ENCODE measurements at regions of chrX and their contacts with region 1.

Region 1: DNA sequence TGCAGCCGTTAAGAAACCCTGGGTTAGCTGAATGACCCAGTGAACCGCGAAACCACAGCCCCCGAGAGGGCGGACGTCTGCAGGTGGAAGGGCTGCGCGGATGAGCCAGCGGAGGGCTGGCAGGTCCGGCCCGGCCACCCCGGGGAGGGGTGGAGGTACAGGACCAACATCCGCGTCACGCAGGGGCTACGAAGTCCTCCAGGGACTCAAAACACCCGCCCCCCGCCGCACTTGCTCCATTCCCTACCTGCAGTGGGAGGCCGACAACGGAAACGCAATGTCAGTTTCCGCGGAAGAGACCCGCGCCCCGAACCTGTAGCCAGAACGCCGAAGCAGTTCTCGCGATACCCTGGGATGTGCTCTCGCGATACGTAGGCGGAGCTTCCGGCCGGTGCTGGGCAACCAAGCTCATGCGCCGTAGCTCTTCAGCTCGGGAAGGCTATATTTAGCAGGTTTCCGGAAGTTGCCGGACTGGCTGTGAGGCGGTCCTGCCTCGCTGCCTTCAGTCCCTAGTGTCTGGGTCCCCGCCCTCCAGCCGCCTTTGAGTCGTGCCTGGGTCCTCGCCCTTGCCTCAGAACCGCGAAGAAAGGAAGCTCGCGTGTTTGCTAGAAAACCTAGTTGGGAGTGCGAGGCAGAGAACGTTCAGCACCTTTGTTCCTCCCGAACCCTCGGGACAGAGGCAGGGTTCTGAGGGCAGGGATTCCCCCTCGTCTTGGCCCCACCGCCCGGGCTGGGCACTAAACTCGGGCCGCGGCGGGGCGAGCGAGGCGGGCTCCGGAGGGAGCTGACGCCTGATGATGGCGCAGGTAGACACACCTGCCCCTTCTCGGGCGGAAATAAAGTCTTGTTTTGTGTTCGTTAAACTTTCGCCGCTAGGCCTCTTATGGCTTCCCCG is at the starts of genes OFD1 and TRAPPC2:
- DNase-seq: peak; percentile 91 to 93 (median 93)
- H3K4me3 ChIP-seq: peak within 1 kb of the TSS; percentile 49 to 84
- H3K4me3 Mint-ChIP-seq: peak within 1 kb of the TSS; percentile 91 to 99 (median 98)
- H3K27ac ChIP-seq: peak within 1 kb of the TSS; percentile 93
- H3K27ac Mint-ChIP-seq: peak within 1 kb of the TSS; percentile 96 to 100 (median 99)
- H3K4me1 ChIP-seq: peaks cover 59% of the 10 kb centered on the region
- H3K4me1 Mint-ChIP-seq: peaks cover 35 to 67% (median 51%) of the 10 kb centered on the region in 4 donors
- H3K27me3 ChIP-seq: no peaks in the 10 kb centered on the region
- H3K27me3 Mint-ChIP-seq: no peaks in the 10 kb centered on the region
- total RNA-seq, gene OFD1: 135 TPM
- total RNA-seq, gene TRAPPC2: 36.6 to 39.6 TPM

Region 2: GRCh38 chrX:13653022-13653693 is 81.4 kb before region 1 on chrX and contains the start of gene TCEANC:
- CTCF ChIA-PET with region 1: no interaction called
- POLR2A ChIA-PET with region 1: interaction called, 20 read pairs
- intact Hi-C with region 1: loop called (anchors 1 kb)
- DNase-seq: peak; percentile 95 to 97 (median 96)
- H3K4me3 ChIP-seq: peak within 1 kb of the TSS; percentile 47 to 75
- H3K4me3 Mint-ChIP-seq: peak within 1 kb of the TSS; percentile 91 to 97 (median 96)
- H3K27ac ChIP-seq: peak within 1 kb of the TSS; percentile 94
- H3K27ac Mint-ChIP-seq: peak within 1 kb of the TSS; percentile 96 to 99 (median 99)
- H3K4me1 ChIP-seq: peaks cover 22% of the 10 kb centered on the region
- H3K4me1 Mint-ChIP-seq: peaks cover 11 to 33% (median 18%) of the 10 kb centered on the region in 4 donors
- H3K27me3 ChIP-seq: no peaks in the 10 kb centered on the region
- H3K27me3 Mint-ChIP-seq: no peaks in the 10 kb centered on the region
- total RNA-seq, gene TCEANC: 14.6 to 16.3 TPM

Region 3: GRCh38 chrX:13658602-13659001 is 75.9 kb before region 1 on chrX:
- CTCF ChIA-PET with region 1: interaction called, 10 read pairs
- POLR2A ChIA-PET with region 1: interaction called, 20 read pairs
- intact Hi-C with region 1: loop called (anchors 1 kb)
- DNase-seq: peak in 4 of 5 donors; percentile 59 to 69 (median 64)
- H3K4me3 ChIP-seq: no peak overlapping the region
- H3K4me3 Mint-ChIP-seq: peak overlapping the region in 3 of 8 donors; percentile 0 to 59 (median 5)
- H3K27ac ChIP-seq: no peak overlapping the region
- H3K27ac Mint-ChIP-seq: peak overlapping the region; percentile 56 to 85 (median 76)
- H3K4me1 ChIP-seq: peaks cover 27% of the 10 kb centered on the region
- H3K4me1 Mint-ChIP-seq: peaks cover 19 to 26% (median 22%) of the 10 kb centered on the region in 4 donors
- H3K27me3 ChIP-seq: no peaks in the 10 kb centered on the region
- H3K27me3 Mint-ChIP-seq: no peaks in the 10 kb centered on the region

Region 4: DNA sequence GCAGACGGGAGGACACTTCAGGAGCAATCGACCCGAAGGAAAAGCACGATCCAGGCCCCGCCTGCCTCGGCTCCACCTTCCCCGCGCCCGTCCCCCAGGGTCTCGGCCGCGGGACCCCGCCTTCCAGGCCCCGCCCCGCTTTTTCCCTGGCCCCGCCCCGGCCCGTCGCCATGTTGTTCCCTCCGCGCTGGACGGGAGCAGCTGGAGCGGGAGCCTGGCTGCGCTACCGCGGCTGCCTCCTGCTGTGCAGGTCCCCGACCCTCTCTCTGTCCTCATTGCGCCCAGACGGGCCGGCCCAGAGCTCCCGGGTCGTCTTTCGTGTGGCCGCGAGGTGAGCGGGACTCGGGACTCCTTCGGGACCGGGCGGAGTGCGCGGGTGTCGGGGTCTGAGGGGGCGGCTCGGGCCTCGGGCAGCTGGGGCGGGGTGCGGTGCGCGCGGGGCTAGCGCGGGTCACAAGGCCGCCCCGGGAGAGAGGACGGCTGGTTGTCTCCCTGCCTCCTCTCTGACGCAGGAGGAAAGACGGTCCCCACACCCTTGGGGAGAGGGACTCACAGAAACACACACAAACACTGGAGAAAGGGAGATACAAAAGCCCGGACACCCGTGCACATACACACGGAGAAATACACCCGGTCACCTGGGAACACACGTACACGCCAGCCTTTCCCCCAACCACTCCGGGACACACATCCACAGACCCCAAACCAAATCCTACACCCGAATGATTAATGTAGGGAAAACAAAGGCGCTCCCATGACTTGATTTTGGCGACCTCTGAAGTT is 45.4 kb before region 1 on chrX and contains the start of gene RAB9A:
- CTCF ChIA-PET with region 1: interaction called, 6 read pairs
- POLR2A ChIA-PET with region 1: interaction called, 42 read pairs
- intact Hi-C with region 1: loop called (anchors 1 kb)
- DNase-seq: peak; percentile 77 to 83 (median 80)
- H3K4me3 ChIP-seq: peak within 1 kb of the TSS; percentile 52
- H3K4me3 Mint-ChIP-seq: peak within 1 kb of the TSS; percentile 89 to 96 (median 93)
- H3K27ac ChIP-seq: peak within 1 kb of the TSS; percentile 87
- H3K27ac Mint-ChIP-seq: peak within 1 kb of the TSS; percentile 94 to 97 (median 96)
- H3K4me1 ChIP-seq: peaks cover 48% of the 10 kb centered on the region
- H3K4me1 Mint-ChIP-seq: peaks cover 32 to 77% (median 54%) of the 10 kb centered on the region in 4 donors
- H3K27me3 ChIP-seq: no peaks in the 10 kb centered on the region
- H3K27me3 Mint-ChIP-seq: no peaks in the 10 kb centered on the region
- total RNA-seq, gene RAB9A: 19.9 to 22.7 TPM

Region 5: DNA sequence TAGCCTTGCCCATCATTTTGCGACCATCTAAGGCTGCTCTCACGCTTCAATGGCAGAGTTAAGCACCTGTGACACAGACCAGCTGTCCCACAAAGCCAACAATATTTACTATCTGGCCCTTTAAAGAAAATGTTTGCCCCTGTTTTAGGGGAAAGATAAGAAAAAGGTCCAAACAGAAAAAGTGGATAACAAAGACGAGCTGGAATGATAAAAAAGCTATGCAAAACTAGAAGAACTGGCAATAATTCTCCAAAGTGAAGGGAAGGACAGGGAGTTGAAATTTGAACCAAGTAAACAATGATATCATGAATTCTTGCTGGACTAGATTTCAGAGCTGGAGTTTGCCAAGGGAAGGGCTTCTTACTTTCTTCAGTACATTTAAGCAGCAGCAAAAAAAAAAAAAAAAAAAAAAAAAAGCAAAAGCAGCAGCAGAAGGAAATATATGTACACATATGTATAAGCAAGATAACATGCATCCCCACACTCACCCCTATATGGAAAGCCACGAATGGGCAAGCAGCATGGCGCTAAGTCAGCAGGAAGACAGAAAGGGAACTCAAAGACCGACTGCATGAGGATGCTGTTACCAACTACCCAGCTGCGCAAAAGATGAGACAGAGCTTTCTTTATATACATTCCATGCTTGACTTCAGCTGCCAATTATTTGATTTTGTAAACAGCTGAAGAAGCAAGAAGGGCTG is 12.6 kb before region 1 on chrX:
- CTCF ChIA-PET with region 1: interaction called, 20 read pairs
- POLR2A ChIA-PET with region 1: interaction called, 196 read pairs
- intact Hi-C with region 1: loop called (anchors 1 kb)
- DNase-seq: no peak
- H3K4me3 ChIP-seq: no peak overlapping the region
- H3K4me3 Mint-ChIP-seq: no peak overlapping the region
- H3K27ac ChIP-seq: no peak overlapping the region
- H3K27ac Mint-ChIP-seq: peak overlapping the region; percentile 30 to 75 (median 59)
- H3K4me1 ChIP-seq: peaks cover 54% of the 10 kb centered on the region
- H3K4me1 Mint-ChIP-seq: peaks cover 31 to 88% (median 60%) of the 10 kb centered on the region in 4 donors
- H3K27me3 ChIP-seq: no peaks in the 10 kb centered on the region
- H3K27me3 Mint-ChIP-seq: no peaks in the 10 kb centered on the region

Region 6: GRCh38 chrX:13750204-13750603 is 15.7 kb after region 1 on chrX:
- CTCF ChIA-PET with region 1: interaction called, 18 read pairs
- POLR2A ChIA-PET with region 1: interaction called, 8 read pairs
- intact Hi-C with region 1: loop called (anchors 2 kb)
- DNase-seq: peak; percentile 37 to 53 (median 48)
- H3K4me3 ChIP-seq: no peak overlapping the region
- H3K4me3 Mint-ChIP-seq: no peak overlapping the region
- H3K27ac ChIP-seq: no peak overlapping the region
- H3K27ac Mint-ChIP-seq: peak overlapping the region; percentile 29 to 85 (median 65)
- H3K4me1 ChIP-seq: peaks cover 20% of the 10 kb centered on the region
- H3K4me1 Mint-ChIP-seq: peaks cover 16 to 28% (median 21%) of the 10 kb centered on the region in 4 donors
- H3K27me3 ChIP-seq: no peaks in the 10 kb centered on the region
- H3K27me3 Mint-ChIP-seq: no peaks in the 10 kb centered on the region

Measured in CD4-positive, alpha-beta memory T cell (primary cell).